ENCODE measurements at regions of chr12 and their contacts with region 1.

Region 1: GRCh38 chr12:56571126-56571525 is 49.5 kb downstream of the RBMS2 start:
- DNase-seq: no peak
- H3K4me3 ChIP-seq: no peak overlapping the region
- H3K27ac ChIP-seq: no peak overlapping the region
- H3K4me1 ChIP-seq: peaks cover 16% of the 10 kb centered on the region
- H3K27me3 ChIP-seq: no peaks in the 10 kb centered on the region
- CTCF ChIP-seq: no peak

Region 2: DNA sequence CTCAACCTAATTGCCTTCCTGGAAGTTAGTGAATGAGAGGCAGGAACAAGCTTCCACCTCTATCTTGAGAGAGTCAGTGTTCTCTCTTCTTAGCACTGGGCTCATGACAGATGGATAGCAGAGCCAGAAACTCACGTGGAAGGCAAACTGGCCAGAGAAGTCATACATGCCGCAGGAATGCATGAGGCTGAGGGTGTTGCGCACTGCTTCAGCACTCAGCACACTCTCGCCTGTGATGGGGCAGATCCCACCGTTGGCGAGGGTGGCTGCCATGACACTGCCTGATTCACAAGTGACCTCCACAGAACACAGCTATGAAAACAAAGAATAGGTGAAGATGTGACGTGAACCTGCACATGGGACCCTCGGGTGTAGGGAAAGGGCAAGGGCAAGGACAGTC is 96.7 kb before region 1 on chr12:
- CTCF ChIA-PET with region 1: no interaction called
- dilution Hi-C with region 1: loop called (anchors 5 kb)
- in situ Hi-C with region 1: no loop called
- intact Hi-C with region 1: no loop called
- DNase-seq: no peak
- H3K4me3 ChIP-seq: no peak overlapping the region
- H3K27ac ChIP-seq: no peak overlapping the region
- H3K4me1 ChIP-seq: peaks cover 5% of the 10 kb centered on the region
- H3K27me3 ChIP-seq: no peaks in the 10 kb centered on the region
- CTCF ChIP-seq: no peak

Region 3: GRCh38 chr12:56593909-56594621 is 22.9 kb after region 1 on chr12:
- CTCF ChIA-PET with region 1: no interaction called
- dilution Hi-C with region 1: no loop called
- in situ Hi-C with region 1: no loop called
- intact Hi-C with region 1: loop called (anchors 1 kb)
- DNase-seq: peak; percentile 59
- H3K4me3 ChIP-seq: no peak overlapping the region
- H3K27ac ChIP-seq: peak overlapping the region; percentile 9
- H3K4me1 ChIP-seq: peaks cover 12% of the 10 kb centered on the region
- H3K27me3 ChIP-seq: no peaks in the 10 kb centered on the region
- CTCF ChIP-seq: peak; percentile 82 to 88